B cell (primary cell): ENCODE measurements at regions of chr3 and their contacts with region 1.

Region 1: GRCh38 chr3:5057857-5058324 is 64.2 kb upstream of the ARL8B start:
- DNase-seq: peak; percentile 86
- ATAC-seq: peak; percentile 89
- H3K4me3 ChIP-seq: no peak overlapping the region
- H3K4me3 Mint-ChIP-seq: no peak overlapping the region
- H3K27ac ChIP-seq: no peak overlapping the region
- H3K27ac Mint-ChIP-seq: no peak overlapping the region
- H3K4me1 ChIP-seq: peaks cover 37 to 44% of the 10 kb centered on the region in 2 donors
- H3K4me1 Mint-ChIP-seq: peaks cover 36% of the 10 kb centered on the region
- H3K27me3 ChIP-seq: peaks cover 0 to 4% (median 0%) of the 10 kb centered on the region in 4 experiments
- H3K27me3 Mint-ChIP-seq: peaks cover 7% of the 10 kb centered on the region
- CTCF ChIP-seq: peak; percentile 82

Region 2: GRCh38 chr3:4720279-4721075 is 337.4 kb before region 1 on chr3:
- CTCF ChIA-PET with region 1: interaction called, 391 read pairs
- POLR2A ChIA-PET with region 1: no interaction called
- intact Hi-C with region 1: no loop called
- DNase-seq: no peak
- ATAC-seq: no peak
- H3K4me3 ChIP-seq: no peak overlapping the region
- H3K4me3 Mint-ChIP-seq: no peak overlapping the region
- H3K27ac ChIP-seq: no peak overlapping the region
- H3K27ac Mint-ChIP-seq: no peak overlapping the region
- H3K4me1 ChIP-seq: no peaks in the 10 kb centered on the region
- H3K4me1 Mint-ChIP-seq: no peaks in the 10 kb centered on the region
- H3K27me3 ChIP-seq: no peaks in the 10 kb centered on the region
- H3K27me3 Mint-ChIP-seq: no peaks in the 10 kb centered on the region
- CTCF ChIP-seq: no peak

Region 3: DNA sequence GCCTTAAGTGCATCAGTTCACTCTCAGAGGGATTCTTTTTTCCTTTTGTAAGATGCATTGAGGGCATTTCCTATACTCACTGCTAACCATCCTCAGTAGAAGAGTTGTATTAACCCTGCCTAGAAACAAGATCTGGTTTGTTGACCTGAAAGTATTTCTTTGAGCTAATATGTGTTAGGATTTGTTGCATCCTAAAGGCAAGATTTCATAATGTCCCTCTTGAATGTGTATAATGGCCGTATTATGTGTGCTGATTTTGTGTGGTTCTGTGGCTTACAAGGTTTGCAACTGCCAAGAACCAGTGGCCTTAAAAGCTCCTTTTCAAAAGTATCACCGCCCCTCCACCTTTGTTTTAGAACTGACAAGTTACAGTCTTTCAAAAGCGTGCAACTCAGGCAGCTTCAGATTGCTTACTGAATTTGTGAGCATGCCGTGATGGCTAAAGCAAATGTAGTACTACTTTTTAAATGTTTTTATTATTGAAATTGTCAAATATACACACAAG is 260.6 kb before region 1 on chr3:
- CTCF ChIA-PET with region 1: interaction called, 11 read pairs
- POLR2A ChIA-PET with region 1: no interaction called
- intact Hi-C with region 1: no loop called
- DNase-seq: no peak
- ATAC-seq: no peak
- H3K4me3 ChIP-seq: no peak overlapping the region
- H3K4me3 Mint-ChIP-seq: no peak overlapping the region
- H3K27ac ChIP-seq: no peak overlapping the region
- H3K27ac Mint-ChIP-seq: no peak overlapping the region
- H3K4me1 ChIP-seq: no peaks in the 10 kb centered on the region
- H3K4me1 Mint-ChIP-seq: no peaks in the 10 kb centered on the region
- H3K27me3 ChIP-seq: no peaks in the 10 kb centered on the region
- H3K27me3 Mint-ChIP-seq: no peaks in the 10 kb centered on the region
- CTCF ChIP-seq: no peak

Region 4: GRCh38 chr3:4826237-4827100 is 231.4 kb before region 1 on chr3:
- CTCF ChIA-PET with region 1: interaction called, 17 read pairs
- POLR2A ChIA-PET with region 1: no interaction called
- intact Hi-C with region 1: loop called (anchors 5 kb)
- DNase-seq: no peak
- ATAC-seq: no peak
- H3K4me3 ChIP-seq: no peak overlapping the region
- H3K4me3 Mint-ChIP-seq: peak overlapping the region; percentile 47
- H3K27ac ChIP-seq: no peak overlapping the region
- H3K27ac Mint-ChIP-seq: no peak overlapping the region
- H3K4me1 ChIP-seq: peaks cover 51 to 59% of the 10 kb centered on the region in 2 donors
- H3K4me1 Mint-ChIP-seq: peaks cover 64% of the 10 kb centered on the region
- H3K27me3 ChIP-seq: no peaks in the 10 kb centered on the region
- H3K27me3 Mint-ChIP-seq: no peaks in the 10 kb centered on the region
- CTCF ChIP-seq: no peak

Region 5: DNA sequence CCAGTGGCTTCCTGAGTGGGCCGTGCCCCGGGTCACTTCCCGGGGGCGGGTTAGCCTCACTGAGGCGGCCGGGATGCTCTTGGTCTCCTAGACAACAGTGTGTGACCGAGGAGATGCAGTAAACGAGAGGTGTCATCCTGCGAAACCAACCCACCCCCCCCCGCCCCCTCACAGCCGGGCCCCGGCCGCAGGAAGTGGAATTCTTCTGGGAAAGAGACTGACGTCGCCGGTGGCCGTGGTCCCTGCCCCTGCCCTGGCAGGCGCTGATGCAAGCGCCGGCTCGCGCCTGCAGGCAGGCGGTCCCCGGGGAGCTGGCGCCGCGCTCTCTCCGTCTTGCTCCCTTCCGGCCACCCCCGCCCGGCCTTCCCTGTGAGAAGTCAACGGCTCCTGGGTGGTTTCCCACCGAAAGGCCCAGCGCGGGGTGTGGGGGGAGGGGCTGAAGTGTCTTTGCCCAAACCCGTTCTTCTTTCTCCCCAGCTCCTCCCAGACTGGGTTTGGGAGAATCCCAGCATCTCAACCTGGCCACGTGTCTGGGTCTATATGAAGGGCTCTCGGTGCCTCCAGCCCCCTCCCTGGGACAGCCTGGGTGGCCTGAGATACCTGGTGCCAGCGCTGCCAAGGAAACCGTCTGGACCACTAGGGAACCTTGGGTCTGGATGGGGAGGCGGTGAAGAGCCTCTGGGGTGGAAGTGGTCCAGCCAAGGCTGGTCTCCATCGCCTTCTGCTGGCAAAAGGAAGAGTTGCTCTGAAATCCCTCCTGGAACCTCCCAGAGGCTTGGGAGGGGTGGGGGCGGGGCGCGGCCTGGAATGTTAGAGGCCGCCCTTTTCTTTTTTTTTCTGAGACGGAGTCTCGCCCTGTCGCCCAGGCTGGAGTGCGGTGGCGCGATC is 31.3 kb before region 1 on chr3:
- CTCF ChIA-PET with region 1: interaction called, 5 read pairs
- POLR2A ChIA-PET with region 1: no interaction called
- intact Hi-C with region 1: loop called (anchors 2 kb)
- DNase-seq: peak; percentile 80
- ATAC-seq: peak; percentile 78
- H3K4me3 ChIP-seq: peak overlapping the region; percentile 21 to 64 (median 57)
- H3K4me3 Mint-ChIP-seq: peak overlapping the region; percentile 91
- H3K27ac ChIP-seq: peak overlapping the region in 1 of 2 donors; percentile 65
- H3K27ac Mint-ChIP-seq: peak overlapping the region; percentile 84
- H3K4me1 ChIP-seq: peaks cover 4 to 18% of the 10 kb centered on the region in 2 donors
- H3K4me1 Mint-ChIP-seq: peaks cover 41% of the 10 kb centered on the region
- H3K27me3 ChIP-seq: no peaks in the 10 kb centered on the region
- H3K27me3 Mint-ChIP-seq: no peaks in the 10 kb centered on the region
- CTCF ChIP-seq: peak; percentile 59

Region 6: GRCh38 chr3:5041315-5041714 is 16.6 kb before region 1 on chr3:
- CTCF ChIA-PET with region 1: interaction called, 10 read pairs
- POLR2A ChIA-PET with region 1: interaction called, 9 read pairs
- intact Hi-C with region 1: no loop called
- DNase-seq: no peak
- ATAC-seq: no peak
- H3K4me3 ChIP-seq: no peak overlapping the region
- H3K4me3 Mint-ChIP-seq: no peak overlapping the region
- H3K27ac ChIP-seq: no peak overlapping the region
- H3K27ac Mint-ChIP-seq: no peak overlapping the region
- H3K4me1 ChIP-seq: peaks cover 18 to 25% of the 10 kb centered on the region in 2 donors
- H3K4me1 Mint-ChIP-seq: peaks cover 26% of the 10 kb centered on the region
- H3K27me3 ChIP-seq: no peaks in the 10 kb centered on the region
- H3K27me3 Mint-ChIP-seq: no peaks in the 10 kb centered on the region
- CTCF ChIP-seq: no peak

Region 7: DNA sequence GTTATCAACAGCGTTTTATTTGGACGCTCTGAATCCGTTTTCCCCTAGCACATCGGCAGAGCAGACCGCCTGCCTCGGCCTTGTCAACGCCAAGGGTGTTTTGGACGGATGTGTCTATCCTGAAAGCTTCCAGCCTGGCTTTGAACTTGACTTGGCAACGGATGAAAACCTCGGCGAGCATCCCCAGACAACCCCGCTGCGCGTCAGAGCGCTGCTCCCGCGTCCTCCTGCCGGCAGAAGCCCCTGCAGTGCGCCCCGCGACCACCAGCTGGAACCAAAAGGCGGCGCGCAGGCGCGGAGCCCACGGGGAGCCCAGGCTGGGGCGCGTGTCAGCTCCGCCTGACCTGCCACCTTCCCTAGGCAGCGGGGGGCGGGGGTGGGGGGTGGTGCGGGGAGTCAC is 38.0 kb after region 1 on chr3:
- CTCF ChIA-PET with region 1: no interaction called
- POLR2A ChIA-PET with region 1: no interaction called
- intact Hi-C with region 1: no loop called
- DNase-seq: peak; percentile 19
- ATAC-seq: no peak
- H3K4me3 ChIP-seq: no peak overlapping the region
- H3K4me3 Mint-ChIP-seq: no peak overlapping the region
- H3K27ac ChIP-seq: no peak overlapping the region
- H3K27ac Mint-ChIP-seq: no peak overlapping the region
- H3K4me1 ChIP-seq: peaks cover 3 to 4% of the 10 kb centered on the region in 2 donors
- H3K4me1 Mint-ChIP-seq: peaks cover 5% of the 10 kb centered on the region
- H3K27me3 ChIP-seq: peaks cover 0 to 19% (median 4%) of the 10 kb centered on the region in 4 experiments
- H3K27me3 Mint-ChIP-seq: peaks cover 51% of the 10 kb centered on the region
- CTCF ChIP-seq: no peak

Region 8: DNA sequence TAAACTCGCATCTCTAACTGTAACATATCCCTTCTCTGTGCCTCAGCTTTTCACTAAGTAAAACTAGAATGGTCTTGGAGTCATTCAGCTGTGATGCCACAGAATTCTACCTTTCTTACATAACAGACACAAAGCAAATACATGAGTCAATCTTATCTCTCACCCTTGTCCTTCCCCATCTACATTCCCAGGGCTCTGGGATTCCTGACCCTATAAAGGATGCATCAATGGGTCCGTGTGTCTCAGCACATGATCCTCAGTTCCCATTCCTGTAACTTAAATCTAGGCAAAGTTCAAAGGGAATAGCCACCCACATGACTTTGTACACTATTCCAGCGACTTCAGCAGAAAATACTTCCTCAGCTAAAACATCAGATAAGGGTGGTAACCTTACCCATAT is 52.4 kb after region 1 on chr3:
- CTCF ChIA-PET with region 1: no interaction called
- POLR2A ChIA-PET with region 1: no interaction called
- intact Hi-C with region 1: no loop called
- DNase-seq: no peak
- ATAC-seq: no peak
- H3K4me3 ChIP-seq: no peak overlapping the region
- H3K4me3 Mint-ChIP-seq: no peak overlapping the region
- H3K27ac ChIP-seq: no peak overlapping the region
- H3K27ac Mint-ChIP-seq: no peak overlapping the region
- H3K4me1 ChIP-seq: no peaks in the 10 kb centered on the region
- H3K4me1 Mint-ChIP-seq: no peaks in the 10 kb centered on the region
- H3K27me3 ChIP-seq: no peaks in the 10 kb centered on the region
- H3K27me3 Mint-ChIP-seq: peaks cover 6% of the 10 kb centered on the region
- CTCF ChIP-seq: no peak